ENCODE measurements at regions of chr9 and their contacts with region 1.

Region 1: GRCh38 chr9:109972026-109972882 is 192.3 kb downstream of the PALM2AKAP2 start:
- DNase-seq: peak; percentile 43
- ATAC-seq: peak; percentile 65
- H3K4me3 Mint-ChIP-seq: peak overlapping the region; percentile 68
- H3K27ac Mint-ChIP-seq: peak overlapping the region; percentile 98
- H3K4me1 Mint-ChIP-seq: peaks cover 100% of the 10 kb centered on the region
- H3K27me3 Mint-ChIP-seq: no peaks in the 10 kb centered on the region
- CTCF ChIP-seq: no peak

Region 2: DNA sequence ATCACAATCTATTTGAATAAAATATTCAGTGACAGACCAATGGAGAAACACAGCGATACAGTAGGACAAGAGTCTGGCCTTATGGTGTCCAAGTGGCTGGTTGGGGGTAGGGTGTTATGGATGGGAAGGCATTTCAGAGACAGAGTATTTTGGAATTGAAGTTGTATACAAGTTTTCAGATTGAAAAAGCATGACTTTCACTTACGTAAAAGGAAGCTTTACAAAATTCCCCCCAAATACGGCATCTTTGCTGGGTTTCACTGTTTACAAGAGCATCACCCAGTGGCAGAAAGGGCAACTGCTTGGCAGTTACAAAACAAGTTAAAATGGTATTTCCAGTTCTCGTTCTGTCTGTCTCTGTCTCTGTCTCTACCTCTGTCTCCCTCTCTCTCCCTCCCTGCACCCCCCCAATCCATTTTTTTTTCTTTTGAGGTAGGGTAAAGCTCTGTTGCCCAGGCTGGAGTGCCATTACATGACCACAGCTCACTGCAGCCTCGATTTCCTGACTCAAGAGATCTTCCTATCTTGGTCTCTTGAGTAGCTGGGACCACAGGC is 560.4 kb before region 1 on chr9:
- CTCF ChIA-PET with region 1: no interaction called
- POLR2A ChIA-PET with region 1: no interaction called
- intact Hi-C with region 1: loop called (anchors 5 kb)
- DNase-seq: no peak
- ATAC-seq: peak; percentile 53
- H3K4me3 Mint-ChIP-seq: peak overlapping the region; percentile 62
- H3K27ac Mint-ChIP-seq: peak overlapping the region; percentile 89
- H3K4me1 Mint-ChIP-seq: peaks cover 60% of the 10 kb centered on the region
- H3K27me3 Mint-ChIP-seq: peaks cover 3% of the 10 kb centered on the region
- CTCF ChIP-seq: no peak

Region 3: DNA sequence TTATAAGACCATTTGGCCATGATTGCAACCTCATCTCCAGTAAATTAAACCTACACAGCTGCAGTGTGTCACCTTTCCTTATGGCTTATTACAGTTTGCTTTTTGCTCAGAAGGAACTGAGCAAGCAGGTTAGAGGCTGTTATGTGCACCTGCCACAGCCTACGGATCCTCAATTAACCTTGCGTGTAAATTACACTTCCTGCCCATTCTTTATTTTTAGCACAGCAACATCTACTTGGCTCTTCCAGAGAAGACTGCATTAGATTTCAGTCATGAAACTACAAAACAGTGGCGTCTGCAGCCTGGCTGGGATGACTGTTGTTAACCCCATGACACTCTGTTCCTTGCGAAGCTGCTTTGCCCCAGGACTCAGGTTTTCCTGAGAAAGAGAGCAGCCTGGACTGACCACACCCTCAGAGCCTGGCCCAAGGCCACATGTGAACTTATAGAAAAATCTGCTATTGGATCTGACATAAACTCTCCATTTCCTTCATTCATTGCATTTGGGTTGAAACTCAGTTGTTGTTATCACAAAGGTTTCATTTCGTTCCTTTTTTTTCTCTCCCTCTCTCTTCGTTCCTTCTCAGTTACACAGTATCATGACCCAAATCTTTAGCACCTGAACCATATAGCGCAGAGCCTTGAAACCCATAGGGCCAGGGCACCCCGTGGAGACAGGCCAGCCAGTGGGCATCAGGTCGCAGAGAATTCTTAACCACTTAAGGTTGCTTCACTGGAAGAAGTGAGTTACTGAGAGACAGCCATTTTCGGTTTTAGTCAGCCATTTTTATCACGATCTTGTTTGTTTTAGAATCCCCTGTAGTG is 53.7 kb before region 1 on chr9:
- CTCF ChIA-PET with region 1: interaction called, 29 read pairs
- POLR2A ChIA-PET with region 1: interaction called, 704 read pairs
- intact Hi-C with region 1: loop called (anchors 1 kb)
- DNase-seq: no peak
- ATAC-seq: peak; percentile 72
- H3K4me3 Mint-ChIP-seq: peak overlapping the region; percentile 58
- H3K27ac Mint-ChIP-seq: peak overlapping the region; percentile 96
- H3K4me1 Mint-ChIP-seq: peaks cover 87% of the 10 kb centered on the region
- H3K27me3 Mint-ChIP-seq: no peaks in the 10 kb centered on the region
- CTCF ChIP-seq: no peak

Region 4: GRCh38 chr9:109953813-109954497 is 18.3 kb before region 1 on chr9:
- CTCF ChIA-PET with region 1: interaction called, 11 read pairs
- POLR2A ChIA-PET with region 1: interaction called, 49 read pairs
- intact Hi-C with region 1: loop called (anchors 1 kb)
- DNase-seq: no peak
- ATAC-seq: peak; percentile 75
- H3K4me3 Mint-ChIP-seq: no peak overlapping the region
- H3K27ac Mint-ChIP-seq: peak overlapping the region; percentile 63
- H3K4me1 Mint-ChIP-seq: peaks cover 61% of the 10 kb centered on the region
- H3K27me3 Mint-ChIP-seq: no peaks in the 10 kb centered on the region
- CTCF ChIP-seq: no peak

Region 5: DNA sequence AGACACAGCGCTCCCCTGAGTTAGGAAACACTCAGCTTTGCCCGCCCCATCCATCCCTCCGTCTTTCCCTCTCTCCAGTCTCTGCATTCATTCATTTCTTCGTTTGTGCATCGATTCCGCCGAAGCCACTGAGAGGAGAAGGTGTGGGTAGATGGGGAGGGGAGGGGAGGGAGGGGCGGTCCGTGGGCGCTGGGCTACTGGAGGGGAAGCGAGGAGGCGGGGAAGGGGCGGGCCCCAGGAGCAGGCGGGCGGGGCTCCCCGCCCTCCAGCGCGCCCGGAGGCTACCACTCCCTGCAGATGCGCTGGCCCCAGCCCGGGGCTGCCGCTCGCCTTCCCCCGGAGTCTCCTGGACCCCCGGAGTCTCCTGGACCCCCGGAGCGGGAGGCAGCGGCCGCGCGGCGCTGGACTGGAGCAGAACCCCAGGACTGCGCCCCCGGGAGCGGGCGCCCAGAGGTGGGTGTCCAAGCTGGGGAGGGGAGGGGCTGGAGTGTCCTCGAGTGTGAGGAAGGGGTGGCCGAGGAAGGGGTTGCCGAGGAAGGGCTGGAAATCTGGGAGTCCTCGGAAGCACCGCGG is 76.2 kb after region 1 on chr9:
- CTCF ChIA-PET with region 1: interaction called, 6 read pairs
- POLR2A ChIA-PET with region 1: interaction called, 412 read pairs
- intact Hi-C with region 1: loop called (anchors 1 kb)
- DNase-seq: peak; percentile 85
- ATAC-seq: peak; percentile 94
- H3K4me3 Mint-ChIP-seq: peak overlapping the region; percentile 99
- H3K27ac Mint-ChIP-seq: peak overlapping the region; percentile 91
- H3K4me1 Mint-ChIP-seq: peaks cover 54% of the 10 kb centered on the region
- H3K27me3 Mint-ChIP-seq: no peaks in the 10 kb centered on the region
- CTCF ChIP-seq: no peak

Region 6: DNA sequence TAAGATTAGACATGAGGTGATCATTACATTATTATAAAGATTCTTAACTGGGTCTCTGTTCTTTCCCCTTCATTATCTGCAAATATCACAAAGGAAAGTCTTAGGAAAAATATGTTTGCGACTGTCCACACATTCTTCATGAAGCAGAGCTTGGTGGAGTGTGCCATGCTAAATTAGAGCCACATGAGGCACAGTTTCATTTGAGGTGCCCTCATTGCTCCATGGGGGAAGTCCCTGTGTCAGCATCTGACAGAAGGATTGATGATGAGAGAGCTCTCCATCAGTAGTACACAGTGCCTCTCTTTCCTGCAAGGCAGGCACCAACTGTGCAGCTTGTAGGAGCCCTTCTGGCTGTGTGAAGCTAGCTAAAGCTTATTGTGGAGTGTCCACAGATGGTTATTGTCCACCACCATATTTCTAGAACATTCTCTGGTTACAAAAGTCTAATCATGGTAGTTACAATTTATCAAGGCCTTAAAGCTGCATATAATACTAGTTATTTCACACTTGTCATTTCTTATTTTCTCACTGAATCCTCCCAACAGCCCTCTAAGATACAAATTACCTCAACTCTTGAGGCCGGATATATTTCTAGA is 171.8 kb after region 1 on chr9:
- CTCF ChIA-PET with region 1: interaction called, 5 read pairs
- POLR2A ChIA-PET with region 1: interaction called, 15 read pairs
- intact Hi-C with region 1: loop called (anchors 1 kb)
- DNase-seq: no peak
- ATAC-seq: peak; percentile 84
- H3K4me3 Mint-ChIP-seq: peak overlapping the region; percentile 73
- H3K27ac Mint-ChIP-seq: peak overlapping the region; percentile 91
- H3K4me1 Mint-ChIP-seq: peaks cover 95% of the 10 kb centered on the region
- H3K27me3 Mint-ChIP-seq: no peaks in the 10 kb centered on the region
- CTCF ChIP-seq: no peak

Region 7: GRCh38 chr9:110266795-110267194 is 294.5 kb after region 1 on chr9:
- CTCF ChIA-PET with region 1: no interaction called
- POLR2A ChIA-PET with region 1: no interaction called
- intact Hi-C with region 1: no loop called
- DNase-seq: no peak
- ATAC-seq: no peak
- H3K4me3 Mint-ChIP-seq: no peak overlapping the region
- H3K27ac Mint-ChIP-seq: no peak overlapping the region
- H3K4me1 Mint-ChIP-seq: no peaks in the 10 kb centered on the region
- H3K27me3 Mint-ChIP-seq: peaks cover 8% of the 10 kb centered on the region
- CTCF ChIP-seq: no peak

Measured in activated B cell treated with CpG ODN at 0.5 μM for 24 hours (primary cell).